ENCODE measurements at regions of chr9 and their contacts with region 1.

Region 1: DNA sequence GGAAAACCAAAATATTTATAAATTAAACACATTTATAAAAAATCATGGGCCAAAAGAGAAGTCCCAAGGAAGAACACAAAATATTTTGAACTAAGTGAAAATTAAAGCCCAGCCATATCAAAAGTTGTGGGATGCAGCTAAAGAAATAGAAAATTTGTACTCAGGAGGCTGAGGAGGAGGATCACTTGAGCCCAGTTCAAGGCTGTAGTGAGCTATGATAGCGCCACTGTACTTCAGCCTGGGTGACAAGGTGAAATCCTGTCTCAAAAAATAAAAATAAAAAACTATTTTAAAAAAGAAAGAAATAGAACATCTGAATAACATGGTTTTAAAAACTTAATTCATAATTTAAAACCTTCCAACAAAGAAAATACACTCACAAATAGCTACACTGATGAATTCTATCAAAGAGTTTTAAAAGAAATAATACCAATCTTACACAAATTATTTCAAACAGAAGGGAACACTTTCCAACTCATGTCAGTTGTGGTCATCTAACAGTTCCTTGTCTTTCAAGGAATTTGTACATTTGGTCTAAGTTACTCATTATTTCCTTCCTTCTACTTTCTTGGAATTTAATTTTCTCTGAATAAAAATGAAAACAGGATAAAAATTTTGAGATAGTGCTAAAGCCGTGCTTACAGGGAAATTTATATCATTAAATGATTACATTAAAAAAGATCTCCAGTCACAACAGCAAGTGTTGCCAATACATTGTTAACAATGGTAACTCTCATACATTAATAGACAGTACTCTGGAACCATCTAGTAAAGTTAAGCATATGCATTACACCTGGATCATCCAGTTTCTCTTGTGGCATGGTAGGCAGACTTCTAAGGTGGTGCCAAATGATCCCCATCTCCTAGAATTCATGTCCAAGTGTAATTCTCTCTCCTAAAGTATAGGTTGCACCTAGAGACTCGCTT is 17.8 kb downstream of the PTBP3 start:
- DNase-seq: no peak
- ATAC-seq: peak; percentile 40
- H3K4me3 Mint-ChIP-seq: peak overlapping the region; percentile 4
- H3K27ac Mint-ChIP-seq: peak overlapping the region; percentile 92
- H3K4me1 Mint-ChIP-seq: peaks cover 78% of the 10 kb centered on the region
- H3K27me3 Mint-ChIP-seq: no peaks in the 10 kb centered on the region
- CTCF ChIP-seq: no peak

Region 2: DNA sequence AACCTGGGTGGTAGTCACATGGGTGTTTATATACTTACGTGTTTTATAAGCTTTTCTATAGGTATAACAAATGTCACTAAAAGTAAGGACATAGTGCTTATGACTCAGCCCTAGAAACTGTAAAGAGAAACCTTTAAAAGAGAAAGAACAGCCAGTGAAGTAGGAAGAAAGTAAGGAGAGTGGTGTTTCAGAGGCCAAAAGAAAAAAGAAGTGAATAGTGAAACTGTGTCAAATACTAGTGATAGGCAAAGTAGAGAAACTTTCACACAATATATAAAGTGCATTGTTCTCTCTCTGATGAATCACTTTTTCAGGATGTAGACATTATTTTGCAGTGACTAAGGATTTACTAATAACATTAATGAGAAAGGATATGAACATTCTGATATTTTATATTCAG is 66.3 kb before region 1 on chr9:
- CTCF ChIA-PET with region 1: no interaction called
- POLR2A ChIA-PET with region 1: no interaction called
- intact Hi-C with region 1: loop called (anchors 10 kb)
- DNase-seq: no peak
- ATAC-seq: peak; percentile 93
- H3K4me3 Mint-ChIP-seq: no peak overlapping the region
- H3K27ac Mint-ChIP-seq: peak overlapping the region; percentile 41
- H3K4me1 Mint-ChIP-seq: peaks cover 21% of the 10 kb centered on the region
- H3K27me3 Mint-ChIP-seq: no peaks in the 10 kb centered on the region
- CTCF ChIP-seq: no peak

Region 3: GRCh38 chr9:112327718-112328464 is 12.3 kb after region 1 on chr9:
- CTCF ChIA-PET with region 1: interaction called, 23 read pairs
- POLR2A ChIA-PET with region 1: interaction called, 14 read pairs
- intact Hi-C with region 1: no loop called
- DNase-seq: no peak
- ATAC-seq: peak; percentile 70
- H3K4me3 Mint-ChIP-seq: no peak overlapping the region
- H3K27ac Mint-ChIP-seq: peak overlapping the region; percentile 5
- H3K4me1 Mint-ChIP-seq: peaks cover 60% of the 10 kb centered on the region
- H3K27me3 Mint-ChIP-seq: no peaks in the 10 kb centered on the region
- CTCF ChIP-seq: no peak

Region 4: GRCh38 chr9:112333639-112334431 is 18.2 kb after region 1 on chr9:
- CTCF ChIA-PET with region 1: interaction called, 23 read pairs
- POLR2A ChIA-PET with region 1: interaction called, 14 read pairs
- intact Hi-C with region 1: no loop called
- DNase-seq: peak; percentile 94
- ATAC-seq: peak; percentile 88
- H3K4me3 Mint-ChIP-seq: peak overlapping the region; percentile 97
- H3K27ac Mint-ChIP-seq: peak overlapping the region; percentile 98
- H3K4me1 Mint-ChIP-seq: peaks cover 30% of the 10 kb centered on the region
- H3K27me3 Mint-ChIP-seq: no peaks in the 10 kb centered on the region
- CTCF ChIP-seq: peak; percentile 53